Pancreas (tissue), 10 donors: ENCODE measurements at regions of chr20 and their contacts with region 1.

Region 1: GRCh38 chr20:38953630-38954340 is 8.4 kb upstream of the DHX35 start:
- DNase-seq: no peak
- ATAC-seq: no peak
- H3K4me3 ChIP-seq: no peak overlapping the region
- H3K27ac ChIP-seq: no peak overlapping the region
- H3K4me1 ChIP-seq: no peaks in the 10 kb centered on the region
- H3K27me3 ChIP-seq: no peaks in the 10 kb centered on the region
- CTCF ChIP-seq: no peak

Region 2: DNA sequence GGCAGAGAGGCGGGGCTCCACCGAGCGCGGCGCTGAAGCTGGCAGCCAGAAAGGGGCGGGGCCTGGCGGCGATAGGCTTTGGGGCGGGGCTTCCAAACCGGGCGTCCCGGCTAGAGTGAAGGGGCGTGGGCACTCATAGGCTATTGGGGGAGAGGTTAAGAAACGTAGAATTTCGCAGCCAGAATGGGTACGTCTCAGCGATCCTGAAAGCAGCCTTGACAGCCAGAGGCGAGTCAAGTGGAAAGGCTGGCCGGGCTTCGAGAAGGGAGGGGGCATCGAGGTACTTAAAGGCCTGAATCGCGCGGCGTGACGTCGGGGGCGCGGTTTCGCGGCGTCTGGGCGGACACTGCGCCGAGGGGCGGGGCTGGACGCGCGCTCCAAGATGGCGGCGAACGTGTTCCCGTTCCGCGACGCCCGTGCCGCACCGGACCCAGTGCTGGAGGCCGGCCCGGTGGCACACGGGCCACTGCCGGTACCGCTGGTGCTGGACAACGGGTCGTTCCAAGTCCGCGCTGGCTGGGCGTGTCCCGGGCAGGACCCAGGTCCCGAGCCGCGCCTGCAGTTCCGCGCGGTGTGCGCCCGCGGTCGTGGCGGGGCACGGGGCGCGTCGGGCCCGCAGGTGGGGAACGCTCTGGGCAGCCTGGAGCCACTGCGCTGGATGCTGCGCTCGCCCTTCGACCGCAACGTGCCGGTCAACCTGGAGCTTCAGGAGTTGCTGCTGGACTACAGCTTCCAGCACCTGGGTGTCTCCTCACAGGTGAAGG is 205.5 kb before region 1 on chr20 and contains the start of gene ACTR5:
- intact Hi-C with region 1: no loop called
- DNase-seq: peak; percentile 92 to 99 (median 96)
- ATAC-seq: peak; percentile 95 to 99 (median 96)
- H3K4me3 ChIP-seq: peak within 1 kb of the TSS; percentile 62 to 97 (median 72)
- H3K27ac ChIP-seq: peak within 1 kb of the TSS; percentile 77 to 86 (median 83)
- H3K4me1 ChIP-seq: peaks cover 0 to 16% (median 8%) of the 10 kb centered on the region in 3 donors
- H3K27me3 ChIP-seq: no peaks in the 10 kb centered on the region
- CTCF ChIP-seq: no peak
- total RNA-seq, gene ACTR5: 2.4 to 4.4 (median 3.1) TPM

Region 3: DNA sequence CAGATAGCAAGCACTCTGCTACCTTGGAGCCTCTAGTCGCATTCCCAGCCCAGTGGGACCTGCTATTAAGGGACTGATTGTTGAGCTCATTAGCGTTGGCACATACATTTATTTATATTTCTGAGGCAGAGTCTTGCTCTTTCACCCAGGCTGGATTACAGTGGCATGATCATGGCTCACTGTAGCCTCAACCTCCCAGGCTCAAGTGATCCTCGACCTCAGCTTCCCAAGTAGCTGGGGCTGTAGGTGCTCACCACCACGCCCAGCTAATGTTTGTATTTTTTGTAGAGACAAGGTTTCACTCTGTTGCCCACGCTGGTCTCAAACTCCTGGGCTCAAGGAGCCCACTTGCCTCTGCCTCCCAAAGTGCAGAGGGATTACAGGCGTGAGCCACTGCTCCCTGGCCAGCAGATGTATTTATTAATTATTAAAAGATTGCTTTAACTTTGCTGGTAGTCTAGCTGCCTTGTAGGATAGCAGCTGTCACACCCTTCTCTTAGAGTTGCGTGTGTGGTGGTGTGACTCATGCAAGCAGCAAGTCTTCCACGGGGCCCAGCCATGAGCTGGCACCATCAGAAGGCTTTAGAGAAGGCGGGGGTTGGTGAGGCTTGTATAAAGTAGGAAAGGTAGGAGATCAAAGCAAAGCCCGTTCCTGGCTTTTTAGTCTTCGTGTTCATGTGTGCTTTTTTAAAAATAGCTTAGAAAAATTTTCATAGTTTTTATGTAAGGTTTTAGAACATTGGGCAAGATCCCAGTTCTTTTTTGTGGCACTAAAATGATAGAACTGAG is 189.0 kb before region 1 on chr20:
- intact Hi-C with region 1: loop called in 1 of 3 experiments (anchors 5 kb)
- DNase-seq: peak in 5 of 6 donors; percentile 21 to 65 (median 60)
- ATAC-seq: peak; percentile 92 to 95 (median 94)
- H3K4me3 ChIP-seq: no peak overlapping the region
- H3K27ac ChIP-seq: no peak overlapping the region
- H3K4me1 ChIP-seq: peaks cover 13 to 20% (median 14%) of the 10 kb centered on the region in 3 donors
- H3K27me3 ChIP-seq: no peaks in the 10 kb centered on the region
- CTCF ChIP-seq: no peak

Region 4: GRCh38 chr20:39049684-39050554 is 96.1 kb after region 1 on chr20:
- intact Hi-C with region 1: no loop called
- DNase-seq: peak; percentile 67 to 95 (median 83)
- ATAC-seq: peak; percentile 94 to 95 (median 94)
- H3K4me3 ChIP-seq: peak overlapping the region; percentile 50 to 81 (median 73)
- H3K27ac ChIP-seq: peak overlapping the region in 1 of 4 donors; percentile 23
- H3K4me1 ChIP-seq: no peaks in the 10 kb centered on the region
- H3K27me3 ChIP-seq: no peaks in the 10 kb centered on the region
- CTCF ChIP-seq: peak; percentile 95 to 98 (median 96)